GM10248 (cell line): ENCODE measurements at regions of chr14 and their contacts with region 1.

Region 1: DNA sequence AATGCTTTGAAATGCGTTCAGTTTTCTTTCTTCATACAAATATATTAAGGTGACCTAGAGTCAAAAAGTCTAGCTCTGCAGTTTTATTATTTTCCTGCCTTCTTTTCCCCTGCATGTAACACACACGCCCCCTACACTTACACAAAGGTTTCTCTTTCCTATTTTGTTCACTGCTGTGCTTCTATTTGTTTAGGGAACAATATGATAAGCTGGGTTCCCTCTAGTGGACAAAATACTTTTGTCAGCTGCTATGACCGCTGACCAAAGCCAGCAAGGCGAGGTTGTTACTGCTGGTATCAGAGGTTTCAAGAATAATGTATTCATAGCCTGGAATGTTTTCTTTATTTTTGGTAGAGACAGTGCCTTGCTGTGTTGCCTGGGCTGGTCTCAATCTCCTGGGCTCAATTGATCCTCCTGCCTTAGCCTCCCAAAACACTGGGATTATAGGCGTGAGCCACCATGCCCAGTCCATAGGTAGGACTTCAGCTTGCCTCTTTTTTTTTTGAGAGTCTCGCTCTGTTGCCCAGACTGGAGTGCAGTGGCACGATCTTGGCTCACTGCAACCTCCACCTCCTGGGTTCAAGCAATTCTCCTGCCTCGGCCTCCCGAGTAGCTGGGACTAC is 33.4 kb downstream of the FNTB start:
- DNase-seq: peak; percentile 60
- CTCF ChIP-seq: peak; percentile 61

Region 2: DNA sequence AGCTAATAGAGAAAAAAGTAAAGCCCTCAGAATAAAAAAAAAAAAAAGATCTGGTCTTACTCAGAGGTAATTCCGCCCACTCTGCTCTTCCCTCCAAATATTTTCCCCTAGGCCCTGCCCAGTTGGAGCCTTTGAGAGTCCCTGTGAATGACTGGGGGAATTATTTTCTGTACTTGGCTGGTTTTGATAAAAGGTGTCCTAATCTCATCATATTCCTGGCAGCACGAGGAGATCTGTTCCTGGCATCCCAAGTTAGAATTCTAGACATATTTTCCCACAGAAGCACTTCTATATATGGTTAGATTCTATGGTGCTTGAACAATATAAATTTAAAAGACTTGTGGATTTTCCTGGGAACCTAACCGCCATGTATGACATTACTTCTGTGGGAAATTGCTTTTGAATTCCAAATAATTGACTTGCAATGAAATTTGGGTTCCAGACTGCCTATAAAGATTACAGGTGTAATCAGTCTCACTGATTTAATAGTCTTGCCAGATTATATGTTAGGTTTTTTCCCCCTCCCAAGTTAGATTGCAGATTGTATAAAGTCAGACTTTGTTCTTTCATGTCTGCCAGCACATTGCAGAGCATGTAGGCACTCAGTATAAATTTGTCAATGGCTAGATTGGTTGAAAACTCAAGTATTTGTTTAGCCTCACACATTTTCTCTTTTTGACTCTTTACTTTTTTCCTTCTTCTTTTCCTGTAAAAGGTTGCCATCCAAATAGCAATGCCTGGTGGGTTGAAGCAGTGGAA is 89.8 kb before region 1 on chr14:
- CTCF ChIA-PET with region 1: no interaction called
- POLR2A ChIA-PET with region 1: no interaction called
- DNase-seq: no peak
- CTCF ChIP-seq: no peak

Region 3: GRCh38 chr14:65003394-65003793 is 16.7 kb before region 1 on chr14:
- CTCF ChIA-PET with region 1: interaction called, 54 read pairs
- POLR2A ChIA-PET with region 1: no interaction called
- DNase-seq: peak; percentile 39
- CTCF ChIP-seq: no peak

Region 4: GRCh38 chr14:65035049-65035448 is 15.0 kb after region 1 on chr14:
- CTCF ChIA-PET with region 1: interaction called, 21 read pairs
- POLR2A ChIA-PET with region 1: no interaction called
- DNase-seq: no peak
- CTCF ChIP-seq: no peak

Region 5: DNA sequence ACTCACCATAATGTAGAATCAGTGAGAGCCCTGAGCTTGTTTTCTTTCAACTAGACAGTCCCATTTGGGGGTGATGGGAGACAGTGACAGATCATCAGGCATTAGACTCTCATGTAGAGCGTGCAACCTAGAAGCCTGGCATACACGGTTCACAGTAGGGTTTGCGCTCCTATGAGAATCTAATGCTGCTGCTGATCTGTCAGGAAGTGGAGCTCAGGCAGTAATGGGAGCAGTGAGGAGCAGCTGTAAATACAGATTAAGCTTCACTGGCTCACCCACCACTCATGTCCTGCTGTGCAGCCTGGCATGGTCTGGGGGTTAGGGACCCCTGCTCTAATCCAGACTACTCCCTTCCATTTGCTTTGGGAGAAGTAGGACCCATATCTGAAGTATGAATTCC is 22.2 kb after region 1 on chr14:
- CTCF ChIA-PET with region 1: interaction called, 21 read pairs
- POLR2A ChIA-PET with region 1: no interaction called
- DNase-seq: no peak
- CTCF ChIP-seq: no peak